Natural killer cell (primary cell): ENCODE measurements at regions of chr1 and their contacts with region 1.

Region 1: DNA sequence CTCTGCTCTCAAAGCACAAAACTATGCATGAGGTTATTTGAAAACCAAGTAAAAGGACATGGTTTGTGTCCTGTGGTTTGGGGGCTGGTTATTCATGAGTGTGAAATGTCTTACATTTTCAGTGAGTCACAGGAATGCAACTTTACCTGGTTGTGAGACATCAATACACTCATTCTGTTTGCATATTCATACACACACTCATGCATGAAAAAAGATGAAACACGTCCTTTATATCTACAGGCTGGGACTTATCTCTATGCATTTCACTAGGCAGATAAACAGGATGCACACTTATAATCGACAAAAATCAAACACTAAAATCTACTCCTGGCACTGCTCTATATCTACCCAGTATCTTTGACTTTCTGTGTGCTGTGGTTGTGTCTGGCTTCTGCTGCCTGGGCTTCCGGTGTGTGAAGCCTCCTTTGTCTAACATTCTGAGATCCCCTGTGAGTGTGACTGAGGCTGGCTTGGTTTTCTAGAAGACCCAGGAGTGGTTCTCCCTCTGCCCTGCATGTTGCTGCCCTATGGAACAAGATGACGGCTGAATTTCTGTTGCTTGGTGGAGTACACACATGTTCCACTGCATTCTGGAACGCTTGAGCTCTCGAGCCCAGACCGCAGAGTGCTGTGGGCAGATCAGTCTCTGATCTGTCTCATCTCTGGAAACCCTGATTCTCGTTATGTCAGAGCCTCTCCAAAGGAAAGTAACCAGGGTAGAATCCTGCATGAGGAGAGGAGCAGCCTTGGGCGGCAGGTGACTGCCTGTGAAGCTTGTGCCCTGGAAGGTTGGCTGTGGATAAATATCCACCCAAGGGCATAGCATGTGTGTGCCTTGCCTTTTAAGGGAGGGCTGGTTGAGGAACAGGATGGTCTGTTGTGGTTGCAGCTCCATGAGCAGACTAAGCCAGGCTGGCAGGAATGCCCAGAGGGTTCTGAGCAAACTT is 19.7 kb upstream of the FASLG start:
- DNase-seq: peak; percentile 47 to 79
- ATAC-seq: peak; percentile 70 to 84 (median 84)
- H3K4me3 ChIP-seq: peak overlapping the region; percentile 8
- H3K4me3 Mint-ChIP-seq: peak overlapping the region; percentile 87
- H3K27ac ChIP-seq: peak overlapping the region; percentile 57
- H3K27ac Mint-ChIP-seq: peak overlapping the region; percentile 90 to 93
- H3K4me1 ChIP-seq: peaks cover 56% of the 10 kb centered on the region
- H3K4me1 Mint-ChIP-seq: peaks cover 57 to 71% of the 10 kb centered on the region in 2 donors
- H3K27me3 ChIP-seq: no peaks in the 10 kb centered on the region
- H3K27me3 Mint-ChIP-seq: no peaks in the 10 kb centered on the region
- CTCF ChIP-seq: no peak

Region 2: DNA sequence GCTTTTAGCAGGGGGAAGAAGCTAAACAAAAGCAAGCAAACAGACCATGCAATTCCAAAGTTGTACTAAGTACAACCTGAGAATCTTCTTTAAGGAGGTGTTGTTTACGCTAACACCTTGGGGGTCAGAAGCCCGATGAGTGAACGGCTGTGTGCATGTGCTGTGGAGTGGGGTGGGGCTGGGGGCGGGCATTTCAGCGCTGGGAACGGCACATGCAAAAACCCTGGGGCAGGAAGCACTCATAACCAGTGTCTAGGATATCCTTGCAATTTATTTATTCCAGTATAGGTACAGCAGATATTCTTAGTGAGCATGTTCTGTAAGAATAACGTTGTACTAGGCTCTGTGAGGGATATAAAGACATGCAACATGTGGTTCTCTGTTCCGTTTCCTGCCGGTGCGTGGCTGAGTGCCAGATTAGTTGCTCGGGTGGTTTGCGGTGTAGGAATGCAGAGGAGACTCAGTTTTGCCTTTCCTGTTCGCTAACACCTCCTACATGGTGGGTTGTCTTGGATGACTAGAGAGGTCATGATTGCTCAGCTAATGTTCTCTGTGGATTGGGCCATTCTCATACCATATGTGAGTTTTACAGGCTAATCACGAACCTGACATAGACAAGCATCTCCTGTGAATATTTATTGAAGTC is 23.4 kb after region 1 on chr1:
- intact Hi-C with region 1: loop called (anchors 1 kb)
- DNase-seq: peak; percentile 83 to 93
- ATAC-seq: peak; percentile 71 to 86 (median 82)
- H3K4me3 ChIP-seq: peak overlapping the region; percentile 72
- H3K4me3 Mint-ChIP-seq: peak overlapping the region; percentile 92
- H3K27ac ChIP-seq: peak overlapping the region; percentile 90
- H3K27ac Mint-ChIP-seq: peak overlapping the region; percentile 98
- H3K4me1 ChIP-seq: peaks cover 30% of the 10 kb centered on the region
- H3K4me1 Mint-ChIP-seq: peaks cover 82 to 88% of the 10 kb centered on the region in 2 donors
- H3K27me3 ChIP-seq: no peaks in the 10 kb centered on the region
- H3K27me3 Mint-ChIP-seq: no peaks in the 10 kb centered on the region
- CTCF ChIP-seq: no peak

Region 3: GRCh38 chr1:172671591-172671990 is 32.4 kb after region 1 on chr1:
- intact Hi-C with region 1: loop called (anchors 1 kb)
- DNase-seq: no peak
- ATAC-seq: no peak
- H3K4me3 ChIP-seq: no peak overlapping the region
- H3K4me3 Mint-ChIP-seq: peak overlapping the region; percentile 82
- H3K27ac ChIP-seq: peak overlapping the region; percentile 83
- H3K27ac Mint-ChIP-seq: peak overlapping the region; percentile 79 to 98
- H3K4me1 ChIP-seq: peaks cover 58% of the 10 kb centered on the region
- H3K4me1 Mint-ChIP-seq: peaks cover 91 to 97% of the 10 kb centered on the region in 2 donors
- H3K27me3 ChIP-seq: no peaks in the 10 kb centered on the region
- H3K27me3 Mint-ChIP-seq: no peaks in the 10 kb centered on the region
- CTCF ChIP-seq: no peak